T-cell (primary cell): ENCODE measurements at regions of chr21 and their contacts with region 1.

Region 1: GRCh38 chr21:33844104-33844889 is 71.3 kb downstream of the ATP5PO start:
- DNase-seq: no peak
- ATAC-seq: no peak
- H3K4me3 ChIP-seq: no peak overlapping the region
- H3K4me3 Mint-ChIP-seq: no peak overlapping the region
- H3K27ac ChIP-seq: no peak overlapping the region
- H3K27ac Mint-ChIP-seq: no peak overlapping the region
- H3K4me1 ChIP-seq: no peaks in the 10 kb centered on the region
- H3K4me1 Mint-ChIP-seq: no peaks in the 10 kb centered on the region
- H3K27me3 ChIP-seq: peaks cover 0 to 24% of the 10 kb centered on the region in 2 experiments
- H3K27me3 Mint-ChIP-seq: no peaks in the 10 kb centered on the region

Region 2: GRCh38 chr21:33572350-33572749 is 271.9 kb before region 1 on chr21:
- CTCF ChIA-PET with region 1: no interaction called
- POLR2A ChIA-PET with region 1: interaction called in 1 of 2 experiments, 10 read pairs
- DNase-seq: no peak
- ATAC-seq: no peak
- H3K4me3 ChIP-seq: no peak overlapping the region
- H3K4me3 Mint-ChIP-seq: no peak overlapping the region
- H3K27ac ChIP-seq: no peak overlapping the region
- H3K27ac Mint-ChIP-seq: peak overlapping the region; percentile 28 to 44
- H3K4me1 ChIP-seq: peaks cover 0 to 10% of the 10 kb centered on the region in 2 experiments
- H3K4me1 Mint-ChIP-seq: peaks cover 12 to 32% (median 26%) of the 10 kb centered on the region in 3 donors
- H3K27me3 ChIP-seq: no peaks in the 10 kb centered on the region
- H3K27me3 Mint-ChIP-seq: no peaks in the 10 kb centered on the region

Region 3: GRCh38 chr21:34579411-34579810 is 735.1 kb after region 1 on chr21:
- CTCF ChIA-PET with region 1: no interaction called
- POLR2A ChIA-PET with region 1: no interaction called
- DNase-seq: no peak
- ATAC-seq: no peak
- H3K4me3 ChIP-seq: no peak overlapping the region
- H3K4me3 Mint-ChIP-seq: no peak overlapping the region
- H3K27ac ChIP-seq: no peak overlapping the region
- H3K27ac Mint-ChIP-seq: no peak overlapping the region
- H3K4me1 ChIP-seq: peaks cover 0 to 4% of the 10 kb centered on the region in 2 experiments
- H3K4me1 Mint-ChIP-seq: peaks cover 4 to 7% (median 5%) of the 10 kb centered on the region in 3 donors
- H3K27me3 ChIP-seq: no peaks in the 10 kb centered on the region
- H3K27me3 Mint-ChIP-seq: no peaks in the 10 kb centered on the region